GM12878 (cell line): ENCODE measurements at regions of chr14 and their contacts with region 1.

Region 1: DNA sequence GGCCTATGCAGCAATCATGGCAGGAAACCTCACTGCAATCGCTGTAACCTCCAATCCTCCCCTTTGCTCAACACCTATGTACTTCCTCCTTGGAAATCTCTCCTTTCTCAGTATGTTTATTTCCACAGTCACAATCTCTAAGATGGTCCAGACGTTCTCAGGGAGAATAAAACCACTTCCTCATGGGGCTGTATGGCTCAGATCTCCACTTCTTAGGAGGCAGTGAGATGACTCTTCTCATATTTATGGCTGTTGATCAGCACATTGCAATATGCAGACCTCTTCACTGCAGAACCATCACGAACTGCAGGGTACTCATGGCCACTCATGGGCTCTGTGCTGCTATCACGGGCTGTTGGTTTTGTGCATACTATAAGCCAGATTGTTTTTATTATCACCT is 17.1 kb upstream of the OR4K17 start:
- DNase-seq: no peak
- ATAC-seq: no peak
- H3K4me3 ChIP-seq: no peak overlapping the region
- H3K27ac ChIP-seq: no peak overlapping the region
- H3K4me1 ChIP-seq: no peaks in the 10 kb centered on the region
- H3K27me3 ChIP-seq: no peaks in the 10 kb centered on the region
- CTCF ChIP-seq: no peak
- EP300 ChIP-seq: no peak
- POLR2A ChIP-seq: no peak
- RAD21 ChIP-seq: no peak

Region 2: GRCh38 chr14:20143911-20144310 is 50.5 kb after region 1 on chr14:
- CTCF ChIA-PET with region 1: no interaction called
- POLR2A ChIA-PET with region 1: no interaction called
- RAD21 ChIA-PET with region 1: no interaction called
- SMC1A ChIA-PET with region 1: no interaction called
- in situ Hi-C with region 1: loop called (anchors 10 kb)
- intact Hi-C with region 1: no loop called
- DNase-seq: no peak
- ATAC-seq: no peak
- H3K4me3 ChIP-seq: no peak overlapping the region
- H3K27ac ChIP-seq: no peak overlapping the region
- H3K4me1 ChIP-seq: no peaks in the 10 kb centered on the region
- H3K27me3 ChIP-seq: no peaks in the 10 kb centered on the region
- CTCF ChIP-seq: peak in 2 of 3 experiments; percentile 14 to 23; a peak in 2 of 6 replicates
- EP300 ChIP-seq: no peak
- POLR2A ChIP-seq: no peak
- RAD21 ChIP-seq: no peak